Dendritic cell treated with granulocyte-macrophage colony-stimulating factor and Interleukin-4, amounts not matched to agents 40 ng/mL and 50 ng/mL, for 4 days (primary cell): ENCODE measurements at regions of chr3 and their contacts with region 1.

Region 1: DNA sequence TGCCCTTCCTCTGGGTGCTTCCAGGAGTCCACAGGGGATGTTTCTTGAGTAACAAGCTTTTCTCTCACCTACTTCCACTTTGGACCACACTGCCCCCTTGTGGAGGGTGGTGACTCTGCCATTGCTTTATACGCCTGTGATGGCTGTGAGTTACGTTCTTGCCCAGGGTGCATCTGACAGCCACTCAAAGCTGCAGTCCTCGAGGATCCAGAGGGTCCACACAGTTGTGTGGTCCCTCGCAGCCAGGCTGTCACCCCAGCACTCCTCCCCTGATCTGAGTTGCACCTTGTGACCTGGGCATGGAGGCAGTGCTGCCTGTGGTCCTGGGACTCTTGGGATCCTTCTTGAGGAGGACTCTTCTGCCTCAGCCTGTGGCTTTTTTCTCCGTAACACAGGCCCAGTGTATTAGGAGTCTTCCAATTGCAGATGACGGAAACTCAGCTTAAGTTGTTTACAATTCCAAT is 23.4 kb downstream of the FOXL2 start:
- H3K4me3 Mint-ChIP-seq: no peak overlapping the region
- H3K27ac Mint-ChIP-seq: no peak overlapping the region
- H3K4me1 Mint-ChIP-seq: peaks cover 6% of the 10 kb centered on the region
- H3K27me3 Mint-ChIP-seq: peaks cover 11% of the 10 kb centered on the region

Region 2: GRCh38 chr3:138493804-138494606 is 429.6 kb before region 1 on chr3:
- intact Hi-C with region 1: no loop called
- H3K4me3 Mint-ChIP-seq: no peak overlapping the region
- H3K27ac Mint-ChIP-seq: no peak overlapping the region
- H3K4me1 Mint-ChIP-seq: peaks cover 33% of the 10 kb centered on the region
- H3K27me3 Mint-ChIP-seq: no peaks in the 10 kb centered on the region

Region 3: DNA sequence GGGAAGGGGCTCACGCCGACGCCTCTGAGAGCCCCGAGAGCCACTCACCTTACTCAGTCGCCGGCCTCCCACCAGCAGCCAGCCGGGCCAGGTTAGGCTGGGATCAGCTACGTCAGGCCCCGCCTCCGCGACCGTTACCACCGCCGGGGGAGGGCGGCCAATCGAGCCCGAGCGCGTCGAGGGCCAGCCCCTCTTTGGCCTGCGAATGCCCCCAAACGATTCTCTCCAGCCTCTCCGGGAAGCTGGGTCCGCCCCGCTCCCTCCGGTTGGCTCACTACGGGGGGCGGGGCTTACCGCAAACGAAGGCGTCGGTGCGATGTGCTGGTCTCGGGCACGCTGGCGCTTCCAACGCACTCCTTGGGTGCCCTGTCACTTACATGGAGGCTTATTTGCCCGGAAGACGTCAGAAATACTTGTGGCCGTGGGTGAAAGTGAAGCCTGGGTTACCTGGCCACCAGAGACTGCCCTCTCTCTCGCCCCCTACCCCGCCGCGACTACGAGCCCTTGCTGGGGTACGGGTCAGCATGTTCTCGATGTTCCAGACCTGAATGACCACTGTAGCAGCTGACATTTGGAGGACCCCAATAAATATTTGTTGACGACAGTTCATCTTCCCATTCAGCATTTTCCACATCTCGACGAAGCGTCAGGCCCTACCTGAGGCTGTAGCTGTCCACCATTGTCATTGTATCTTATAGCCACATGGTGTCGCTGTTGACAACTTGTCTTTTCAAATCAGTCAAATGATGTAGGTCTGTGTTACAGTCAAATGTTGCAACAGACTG is 329.2 kb before region 1 on chr3 and contains the start of gene CEP70:
- intact Hi-C with region 1: loop called (anchors 1 kb)
- H3K4me3 Mint-ChIP-seq: peak within 1 kb of the TSS; percentile 80
- H3K27ac Mint-ChIP-seq: peak within 1 kb of the TSS; percentile 64
- H3K4me1 Mint-ChIP-seq: peaks cover 16% of the 10 kb centered on the region
- H3K27me3 Mint-ChIP-seq: peaks cover 22% of the 10 kb centered on the region